Right cardiac atrium (tissue), 5 donors: ENCODE measurements at regions of chr10 and their contacts with region 1.

Region 1: GRCh38 chr10:5609952-5610616 is 56.3 kb downstream of the ASB13 start:
- DNase-seq: peak in 1 of 3 donors; percentile 44
- ATAC-seq: peak in 1 of 2 donors; percentile 15
- H3K4me3 ChIP-seq: no peak overlapping the region
- H3K27ac ChIP-seq: no peak overlapping the region
- H3K4me1 ChIP-seq: no peaks in the 10 kb centered on the region
- H3K27me3 ChIP-seq: no peaks in the 10 kb centered on the region

Region 2: DNA sequence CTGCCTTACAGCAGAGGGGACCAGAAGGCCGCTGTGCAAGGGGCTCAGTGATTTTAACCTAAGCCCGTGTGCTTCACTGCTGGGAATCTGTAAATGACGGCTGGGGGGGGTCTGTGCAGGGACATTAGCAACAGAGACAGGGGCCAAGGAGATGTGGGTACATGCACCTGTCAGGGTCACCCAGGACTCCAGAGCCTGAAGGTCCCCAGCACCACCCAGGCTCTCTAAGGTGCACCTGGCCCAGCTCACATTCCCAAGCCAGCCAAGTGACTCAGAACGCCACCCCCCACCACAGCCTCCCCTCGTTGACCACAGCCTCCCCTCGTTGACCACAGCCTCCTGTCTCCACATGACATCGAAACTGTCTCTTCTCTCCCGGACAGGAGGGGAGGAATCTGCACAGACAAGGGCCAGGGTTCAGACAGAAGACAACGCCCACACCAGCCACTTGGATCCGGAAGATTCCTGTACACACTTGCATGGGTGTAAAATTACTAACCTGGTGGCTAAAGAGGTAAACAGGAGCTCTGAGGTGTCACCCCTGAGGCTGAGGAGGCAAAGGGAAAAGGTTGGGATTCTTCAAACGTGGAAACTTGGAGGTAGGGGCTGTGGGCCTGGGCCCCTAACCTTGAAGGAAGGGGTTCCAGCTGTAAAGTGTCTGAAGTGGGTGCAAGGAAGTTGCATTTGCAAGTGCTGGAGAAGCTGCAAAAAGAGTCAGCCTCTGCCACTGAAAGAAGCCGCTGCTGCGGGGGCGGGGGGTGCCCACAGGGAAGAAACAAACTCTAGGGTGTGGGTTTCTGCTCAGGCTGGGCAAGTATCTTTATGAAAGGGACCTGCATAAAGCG is 58.3 kb before region 1 on chr10:
- intact Hi-C with region 1: loop called in 1 of 4 experiments (anchors 10 kb)
- DNase-seq: no peak
- ATAC-seq: no peak
- H3K4me3 ChIP-seq: no peak overlapping the region
- H3K27ac ChIP-seq: no peak overlapping the region
- H3K4me1 ChIP-seq: peaks cover 4% of the 10 kb centered on the region
- H3K27me3 ChIP-seq: no peaks in the 10 kb centered on the region

Region 3: DNA sequence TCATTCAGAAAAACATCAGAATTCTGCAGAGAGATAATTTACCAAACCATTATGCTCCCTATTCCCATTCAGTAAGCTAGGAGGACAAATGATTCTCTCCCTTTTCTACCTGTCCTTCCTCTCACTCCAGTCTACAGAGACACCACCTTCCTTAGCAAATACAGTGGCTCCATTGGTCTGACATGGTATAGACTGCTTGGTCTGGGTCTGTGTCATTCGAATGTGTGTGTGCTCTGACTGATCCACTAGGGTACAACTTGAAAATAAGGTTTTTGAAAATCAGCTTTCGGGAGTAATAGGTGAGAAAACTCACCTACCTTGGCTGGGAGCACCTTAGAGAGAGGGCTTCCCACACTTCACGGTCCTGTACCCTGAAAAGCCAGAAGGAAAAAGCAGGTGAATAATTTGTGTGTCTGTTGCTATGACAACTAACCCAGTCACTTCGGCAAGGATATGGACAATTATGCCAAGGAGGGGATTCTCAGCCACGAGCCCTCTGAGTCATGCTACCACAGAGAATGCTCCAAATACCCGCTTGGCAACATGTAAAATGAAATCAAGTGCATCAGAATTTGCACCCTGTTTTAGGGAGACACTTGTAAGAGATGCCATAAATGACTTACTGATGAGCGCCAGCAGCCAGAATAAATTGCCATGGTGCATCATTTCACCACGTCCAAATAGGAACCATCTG is 1084.5 kb after region 1 on chr10:
- intact Hi-C with region 1: no loop called
- DNase-seq: no peak
- ATAC-seq: no peak
- H3K4me3 ChIP-seq: no peak overlapping the region
- H3K27ac ChIP-seq: no peak overlapping the region
- H3K4me1 ChIP-seq: no peaks in the 10 kb centered on the region
- H3K27me3 ChIP-seq: no peaks in the 10 kb centered on the region